ENCODE measurements at regions of chr2 and their contacts with region 1.

Region 1: GRCh38 chr2:173027181-173028128 is 48.2 kb upstream of the MAP3K20 start:
- DNase-seq: peak; percentile 46 to 95 (median 80)
- H3K4me3 ChIP-seq: peak overlapping the region in 1 of 59 donors; percentile 20
- H3K27ac ChIP-seq: peak overlapping the region in 57 of 59 donors; percentile 50 to 96 (median 81)
- H3K27me3 ChIP-seq: no peaks in the 10 kb centered on the region
- CTCF ChIP-seq: peak; percentile 80 to 99 (median 97)

Region 2: GRCh38 chr2:172931918-172932520 is 95.4 kb before region 1 on chr2:
- intact Hi-C with region 1: no loop called
- DNase-seq: peak in 7 of 10 donors; percentile 58 to 86 (median 69)
- H3K4me3 ChIP-seq: peak overlapping the region in 20 of 59 donors; percentile 7 to 42 (median 26)
- H3K27ac ChIP-seq: peak overlapping the region in 37 of 59 donors; percentile 6 to 85 (median 67)
- H3K27me3 ChIP-seq: no peaks in the 10 kb centered on the region
- CTCF ChIP-seq: peak; percentile 61 to 85 (median 76)

Region 3: GRCh38 chr2:173161040-173161439 is 133.6 kb after region 1 on chr2:
- intact Hi-C with region 1: no loop called
- DNase-seq: no peak
- H3K4me3 ChIP-seq: no peak overlapping the region
- H3K27ac ChIP-seq: no peak overlapping the region
- H3K27me3 ChIP-seq: no peaks in the 10 kb centered on the region
- CTCF ChIP-seq: no peak

Region 4: DNA sequence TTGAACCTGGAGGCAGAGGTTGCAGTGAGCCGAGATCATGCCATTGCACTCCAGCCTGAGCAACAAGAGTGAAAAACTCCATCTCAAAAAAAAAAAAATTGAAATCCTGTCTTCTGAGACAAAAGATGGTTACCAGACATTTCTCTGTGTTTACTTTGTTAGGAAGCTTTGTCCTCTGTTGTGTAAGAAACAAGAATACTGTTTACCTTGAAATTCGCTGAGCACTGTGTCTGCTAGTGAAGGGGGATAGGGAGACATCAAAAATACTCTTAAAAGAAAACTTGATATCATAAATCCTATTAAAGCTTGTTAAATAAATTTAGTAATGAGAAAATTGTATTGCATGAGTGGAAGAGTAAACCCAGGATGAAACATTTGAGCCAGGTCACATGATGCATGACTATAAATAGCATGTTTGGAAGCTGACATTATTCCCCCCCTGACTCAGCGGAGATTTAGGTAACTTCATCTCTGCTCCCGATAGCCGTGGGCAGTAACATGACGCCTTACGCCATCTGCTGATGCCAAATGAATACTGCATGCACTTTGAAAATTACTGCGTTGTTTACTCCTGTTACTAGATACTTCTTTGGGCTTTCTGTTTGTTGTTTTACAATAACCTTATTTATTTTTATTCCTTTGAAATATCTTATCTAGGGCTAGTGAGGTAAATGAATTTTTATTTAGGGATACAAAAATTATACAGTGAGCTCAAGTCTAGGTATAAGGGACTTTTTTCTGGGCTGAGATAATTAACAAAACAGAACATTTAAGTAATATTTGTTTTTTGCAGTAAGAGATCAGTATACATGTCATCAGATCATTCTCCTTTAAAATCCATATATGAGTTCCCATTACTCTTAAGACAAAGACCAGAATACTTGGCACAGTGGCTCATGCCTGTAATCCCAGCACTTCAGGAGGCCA is 183.1 kb after region 1 on chr2:
- intact Hi-C with region 1: loop called (anchors 2 to 5 kb)
- DNase-seq: peak in 6 of 10 donors; percentile 40 to 67 (median 44)
- H3K4me3 ChIP-seq: peak overlapping the region in 2 of 59 donors; percentile 15 to 23
- H3K27ac ChIP-seq: peak overlapping the region in 21 of 59 donors; percentile 3 to 57 (median 30)
- H3K27me3 ChIP-seq: no peaks in the 10 kb centered on the region
- CTCF ChIP-seq: peak; percentile 79 to 99 (median 88)

Region 5: DNA sequence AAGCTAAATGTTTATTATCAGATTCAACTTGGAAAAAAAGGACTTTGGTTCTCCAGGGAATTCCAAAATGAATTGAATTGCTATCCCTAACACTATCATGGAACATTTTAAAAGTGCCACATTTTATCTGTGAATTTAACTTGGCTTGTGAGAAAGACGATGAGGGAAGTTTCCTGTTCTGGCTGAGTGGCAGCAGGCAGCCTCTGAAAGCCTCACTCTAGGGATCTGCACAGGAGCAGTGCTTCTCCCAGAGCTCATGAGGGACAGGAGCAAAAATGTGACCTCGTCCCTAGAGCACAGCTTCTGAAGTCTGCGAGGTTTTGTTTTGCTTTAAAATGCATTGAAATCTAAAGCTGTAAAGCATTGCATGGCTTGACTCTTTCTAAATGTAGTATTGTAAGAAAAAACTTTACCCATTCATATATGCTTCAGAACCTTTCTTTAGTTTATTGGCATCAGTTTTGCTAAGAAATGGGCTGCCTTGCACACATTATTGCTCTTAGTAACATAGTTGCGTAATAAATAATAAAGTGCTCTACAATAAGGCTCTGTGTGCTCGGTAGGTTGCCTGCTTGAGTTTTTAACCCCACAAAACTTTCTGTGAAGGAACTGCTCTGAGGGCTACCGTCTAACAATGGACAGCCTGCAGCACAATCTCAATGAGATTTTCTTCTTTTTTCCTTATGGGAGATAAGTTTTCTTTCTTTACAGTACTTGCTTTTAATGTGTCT is 191.0 kb after region 1 on chr2:
- intact Hi-C with region 1: loop called in 1 of 2 experiments (anchors 5 kb)
- DNase-seq: no peak
- H3K4me3 ChIP-seq: peak overlapping the region in 19 of 59 donors; percentile 3 to 52 (median 21)
- H3K27ac ChIP-seq: peak overlapping the region in 22 of 59 donors; percentile 3 to 66 (median 27)
- H3K27me3 ChIP-seq: no peaks in the 10 kb centered on the region
- CTCF ChIP-seq: no peak

Region 6: DNA sequence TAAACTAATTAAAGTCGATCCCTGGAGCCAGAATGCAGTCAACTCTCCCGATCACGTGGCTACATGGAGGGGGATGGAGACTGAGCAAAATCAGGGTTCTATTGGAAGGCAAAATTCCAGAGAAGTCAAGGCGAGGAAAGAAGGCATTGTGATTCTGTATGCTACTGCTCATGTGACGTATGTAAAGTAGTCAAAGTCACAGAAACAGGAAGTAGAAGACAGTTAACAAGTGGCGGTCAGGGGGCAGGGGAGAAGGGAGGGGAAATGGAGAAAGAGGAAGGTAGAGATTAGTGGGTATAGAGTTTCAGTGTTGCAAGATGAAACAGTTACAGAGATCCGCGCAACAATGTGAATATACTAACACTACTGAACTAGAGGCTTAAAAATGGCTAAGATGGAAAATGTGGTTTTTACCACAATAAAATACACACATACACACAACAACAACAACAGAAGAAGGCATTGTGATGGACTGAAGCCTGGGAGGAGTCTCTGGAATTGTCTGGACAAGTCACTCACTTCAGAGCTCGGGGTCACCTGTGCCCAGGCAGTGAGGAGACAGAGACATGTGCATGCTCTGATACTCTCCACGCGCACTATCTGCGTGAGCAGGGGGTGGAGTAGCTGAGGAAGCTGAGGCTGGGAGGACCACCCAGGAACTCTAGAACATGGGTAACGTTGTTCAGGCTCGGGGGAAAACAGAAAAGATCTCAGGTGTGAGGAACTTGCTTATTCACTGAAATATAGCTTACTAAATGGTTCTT is 237.3 kb after region 1 on chr2:
- intact Hi-C with region 1: no loop called
- DNase-seq: no peak
- H3K4me3 ChIP-seq: no peak overlapping the region
- H3K27ac ChIP-seq: no peak overlapping the region
- H3K27me3 ChIP-seq: no peaks in the 10 kb centered on the region
- CTCF ChIP-seq: no peak

Measured in dorsolateral prefrontal cortex (tissue), 120 donors.